ENCODE measurements at regions of chr20 and their contacts with region 1.

Region 1: DNA sequence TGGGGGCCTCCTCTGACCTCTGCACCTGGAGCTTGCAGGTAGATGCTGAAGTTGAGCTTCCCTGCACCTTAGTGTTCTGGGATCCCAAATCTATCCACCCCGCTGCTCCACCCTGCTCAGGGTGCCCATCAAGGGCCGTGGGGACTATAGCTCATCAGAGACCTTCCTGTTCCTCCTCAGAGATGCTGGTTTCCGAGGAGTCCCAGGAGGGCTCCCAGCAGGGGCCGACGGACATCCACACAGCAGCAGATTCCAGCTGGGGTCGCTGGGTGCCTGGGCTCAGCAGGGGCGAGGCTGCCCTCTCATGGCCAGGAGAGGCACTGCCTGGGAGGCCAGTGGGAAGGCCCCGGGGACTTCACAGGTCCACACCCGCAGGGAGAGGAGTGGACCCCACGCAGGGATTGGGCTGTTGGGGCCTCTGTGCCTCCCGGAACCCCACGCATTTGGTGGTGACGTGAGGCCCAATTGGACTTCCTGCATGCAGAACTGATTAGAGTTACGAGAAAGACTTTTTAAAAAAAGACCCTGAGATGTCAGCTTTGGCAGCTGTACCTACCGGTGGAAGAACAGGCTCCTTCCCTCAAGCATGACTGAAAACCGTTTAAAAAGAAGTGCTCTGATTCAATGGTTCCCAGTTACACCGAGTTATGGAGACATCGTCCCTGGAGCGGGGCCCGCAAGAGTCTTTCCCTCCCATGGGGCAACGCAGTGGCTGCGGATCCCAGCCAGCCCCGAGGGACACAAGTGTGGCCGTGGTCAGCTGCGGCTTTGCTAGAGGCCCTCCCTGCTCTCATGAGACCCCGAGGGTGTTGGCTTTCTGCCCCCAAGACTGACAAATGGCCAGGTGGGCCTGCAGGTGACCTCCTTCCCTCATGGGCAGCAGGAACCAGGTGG is 25.3 kb upstream of the SLCO4A1 start:
- DNase-seq: peak in 4 of 6 donors; percentile 69 to 90 (median 84)
- ATAC-seq: peak; percentile 84 to 98 (median 95)
- H3K4me3 ChIP-seq: no peak overlapping the region
- H3K27ac ChIP-seq: peak overlapping the region in 1 of 4 donors; percentile 23
- H3K4me1 ChIP-seq: no peaks in the 10 kb centered on the region
- H3K27me3 ChIP-seq: no peaks in the 10 kb centered on the region
- CTCF ChIP-seq: peak; percentile 78 to 99 (median 92)

Region 2: GRCh38 chr20:62448038-62448437 is 168.9 kb before region 1 on chr20:
- intact Hi-C with region 1: no loop called
- DNase-seq: no peak
- ATAC-seq: no peak
- H3K4me3 ChIP-seq: no peak overlapping the region
- H3K27ac ChIP-seq: no peak overlapping the region
- H3K4me1 ChIP-seq: no peaks in the 10 kb centered on the region
- H3K27me3 ChIP-seq: no peaks in the 10 kb centered on the region
- CTCF ChIP-seq: no peak

Region 3: GRCh38 chr20:62500237-62500864 is 116.6 kb before region 1 on chr20:
- intact Hi-C with region 1: loop called in 2 of 3 experiments (anchors 5 kb)
- DNase-seq: peak; percentile 58 to 93 (median 81)
- ATAC-seq: peak; percentile 64 to 83 (median 80)
- H3K4me3 ChIP-seq: no peak overlapping the region
- H3K27ac ChIP-seq: no peak overlapping the region
- H3K4me1 ChIP-seq: peaks cover 7 to 10% (median 8%) of the 10 kb centered on the region in 3 donors
- H3K27me3 ChIP-seq: no peaks in the 10 kb centered on the region
- CTCF ChIP-seq: peak; percentile 67 to 86 (median 72)

Region 4: DNA sequence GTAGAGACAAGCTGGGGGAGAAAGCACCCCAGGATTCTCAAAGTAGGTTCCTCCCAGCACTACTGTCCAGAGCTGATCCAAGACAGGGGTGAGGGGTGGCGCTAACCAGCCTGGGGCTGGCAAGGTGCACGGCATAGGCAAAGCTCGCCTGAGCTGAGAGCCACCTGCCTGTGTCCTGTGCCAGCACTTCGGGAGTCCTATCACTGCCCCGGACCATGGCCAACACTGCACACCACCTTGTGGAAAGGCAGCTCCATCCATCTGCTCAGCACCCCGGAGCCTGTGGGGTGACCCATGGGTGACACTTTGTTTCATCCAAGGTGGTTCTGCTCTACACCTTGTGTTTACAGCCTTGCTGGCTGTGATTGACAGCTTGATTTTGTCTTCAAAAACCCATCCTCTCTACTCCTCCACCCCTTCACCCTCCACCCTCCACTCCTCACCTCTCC is 108.3 kb before region 1 on chr20:
- intact Hi-C with region 1: loop called in 2 of 3 experiments (anchors 5 kb)
- DNase-seq: no peak
- ATAC-seq: peak in 2 of 4 donors; percentile 46 to 58
- H3K4me3 ChIP-seq: no peak overlapping the region
- H3K27ac ChIP-seq: no peak overlapping the region
- H3K4me1 ChIP-seq: no peaks in the 10 kb centered on the region
- H3K27me3 ChIP-seq: no peaks in the 10 kb centered on the region
- CTCF ChIP-seq: no peak

Region 5: DNA sequence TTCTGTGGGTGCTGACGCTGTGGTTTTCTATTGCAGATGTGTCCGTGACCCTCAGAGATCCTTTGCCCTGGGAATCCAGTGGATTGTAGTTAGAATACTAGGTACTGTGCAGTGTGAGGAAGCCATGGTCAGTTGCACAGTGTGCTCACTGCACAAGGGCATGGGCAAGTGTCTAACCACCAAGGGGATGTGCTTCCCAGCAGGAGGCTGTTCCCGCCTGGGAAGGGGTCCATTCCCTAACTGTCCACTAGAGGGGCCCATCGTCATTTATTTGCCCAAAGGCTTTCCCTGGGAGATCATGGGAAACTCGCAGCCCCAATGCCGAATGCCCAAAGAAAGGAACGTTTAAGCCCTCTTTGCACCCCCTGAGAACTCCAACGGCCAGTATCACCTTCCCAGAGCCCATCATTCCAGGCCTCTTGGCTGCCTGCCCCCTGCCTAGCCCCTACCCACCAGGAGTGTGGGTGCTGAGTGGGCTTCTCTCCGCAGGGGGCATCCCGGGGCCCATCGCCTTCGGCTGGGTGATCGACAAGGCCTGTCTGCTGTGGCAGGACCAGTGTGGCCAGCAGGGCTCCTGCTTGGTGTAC is 51.6 kb after region 1 on chr20:
- intact Hi-C with region 1: no loop called
- DNase-seq: peak in 4 of 6 donors; percentile 63 to 83 (median 72)
- ATAC-seq: peak; percentile 60 to 80 (median 77)
- H3K4me3 ChIP-seq: no peak overlapping the region
- H3K27ac ChIP-seq: no peak overlapping the region
- H3K4me1 ChIP-seq: no peaks in the 10 kb centered on the region
- H3K27me3 ChIP-seq: no peaks in the 10 kb centered on the region
- CTCF ChIP-seq: peak; percentile 73 to 83 (median 78)